Caco-2 (cell line): ENCODE measurements at regions of chr3 and their contacts with region 1.

Region 1: GRCh38 chr3:34864011-34864410 is 775.3 kb upstream of the ARPP21 start:
- DNase-seq: no peak
- H3K4me3 ChIP-seq: no peak overlapping the region
- H3K4me3 Mint-ChIP-seq: no peak overlapping the region
- H3K27ac Mint-ChIP-seq: no peak overlapping the region
- H3K4me1 ChIP-seq: no peaks in the 10 kb centered on the region
- H3K4me1 Mint-ChIP-seq: no peaks in the 10 kb centered on the region
- H3K27me3 ChIP-seq: no peaks in the 10 kb centered on the region
- H3K27me3 Mint-ChIP-seq: peaks cover 4% of the 10 kb centered on the region
- CTCF ChIP-seq: no peak

Region 2: DNA sequence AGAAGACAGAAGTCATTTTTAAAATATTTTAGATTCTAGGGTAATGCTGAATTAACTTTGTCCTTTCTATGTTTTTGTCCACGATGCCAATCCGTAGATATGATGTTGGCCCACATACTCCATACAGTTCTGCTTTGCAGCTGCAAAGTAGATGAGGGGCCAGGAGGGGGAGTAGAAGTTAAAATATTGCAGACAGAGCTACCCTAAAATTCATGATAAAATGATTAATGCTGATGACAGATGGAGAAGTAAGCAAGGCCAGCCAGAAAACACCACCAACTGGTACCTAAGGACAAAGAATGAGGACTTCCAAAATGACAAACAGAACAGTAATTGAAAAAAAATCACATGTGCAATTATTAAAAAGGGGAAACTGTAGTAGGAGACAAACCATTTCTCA is 18.8 kb after region 1 on chr3:
- CTCF ChIA-PET with region 1: no interaction called
- POLR2A ChIA-PET with region 1: no interaction called
- intact Hi-C with region 1: no loop called
- DNase-seq: peak in 1 of 2 experiments; percentile 1
- H3K4me3 ChIP-seq: no peak overlapping the region
- H3K4me3 Mint-ChIP-seq: no peak overlapping the region
- H3K27ac Mint-ChIP-seq: no peak overlapping the region
- H3K4me1 ChIP-seq: no peaks in the 10 kb centered on the region
- H3K4me1 Mint-ChIP-seq: no peaks in the 10 kb centered on the region
- H3K27me3 ChIP-seq: no peaks in the 10 kb centered on the region
- H3K27me3 Mint-ChIP-seq: no peaks in the 10 kb centered on the region
- CTCF ChIP-seq: peak; percentile 11 to 31

Region 3: DNA sequence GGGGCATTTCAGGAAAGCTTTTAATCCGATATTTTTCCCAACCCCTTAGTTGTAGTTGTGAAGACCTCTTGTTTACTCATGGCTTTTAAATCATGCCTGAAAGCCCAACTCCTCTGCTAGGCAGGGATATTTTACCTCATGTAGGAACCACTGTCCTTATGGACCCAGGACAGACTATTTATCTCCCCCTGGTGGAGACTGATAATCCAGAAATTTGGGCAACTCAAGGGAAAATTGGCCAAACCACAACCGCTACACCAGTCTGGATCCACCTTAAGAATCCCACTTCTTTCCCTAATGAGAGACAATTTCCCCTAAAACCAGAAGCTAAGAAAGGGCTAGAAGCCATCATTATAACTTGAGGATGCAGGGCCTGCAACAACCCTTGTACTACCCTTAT is 1268.2 kb after region 1 on chr3:
- CTCF ChIA-PET with region 1: no interaction called
- POLR2A ChIA-PET with region 1: interaction called, 13 read pairs
- intact Hi-C with region 1: no loop called
- DNase-seq: no peak
- H3K4me3 ChIP-seq: no peak overlapping the region
- H3K4me3 Mint-ChIP-seq: no peak overlapping the region
- H3K27ac Mint-ChIP-seq: no peak overlapping the region
- H3K4me1 ChIP-seq: peaks cover 15% of the 10 kb centered on the region
- H3K4me1 Mint-ChIP-seq: peaks cover 9% of the 10 kb centered on the region
- H3K27me3 ChIP-seq: no peaks in the 10 kb centered on the region
- H3K27me3 Mint-ChIP-seq: no peaks in the 10 kb centered on the region
- CTCF ChIP-seq: no peak